Mucosa of descending colon (tissue), 3 donors: ENCODE measurements at regions of chr5 and their contacts with region 1.

Region 1: GRCh38 chr5:176415952-176416924 is at the start of gene CLTB:
- DNase-seq: peak; percentile 94 to 97 (median 96)
- ATAC-seq: peak; percentile 94
- H3K4me3 ChIP-seq: peak within 1 kb of the TSS; percentile 94
- H3K4me1 ChIP-seq: peaks cover 37% of the 10 kb centered on the region
- CTCF ChIP-seq: peak; percentile 73
- total RNA-seq, gene CLTB: 144 to 234 (median 199) TPM

Region 2: GRCh38 chr5:176543428-176544173 is 127.4 kb after region 1 on chr5:
- intact Hi-C with region 1: loop called in 1 of 2 experiments (anchors 10 kb)
- DNase-seq: peak; percentile 88 to 90 (median 90)
- ATAC-seq: peak; percentile 59
- H3K4me3 ChIP-seq: peak overlapping the region; percentile 59
- H3K4me1 ChIP-seq: peaks cover 33% of the 10 kb centered on the region
- CTCF ChIP-seq: no peak